Activated naive CD4-positive, alpha-beta T cell treated with anti-CD3 and anti-CD28 coated beads for 36 hours (primary cell): ENCODE measurements at regions of chr17 and their contacts with region 1.

Region 1: DNA sequence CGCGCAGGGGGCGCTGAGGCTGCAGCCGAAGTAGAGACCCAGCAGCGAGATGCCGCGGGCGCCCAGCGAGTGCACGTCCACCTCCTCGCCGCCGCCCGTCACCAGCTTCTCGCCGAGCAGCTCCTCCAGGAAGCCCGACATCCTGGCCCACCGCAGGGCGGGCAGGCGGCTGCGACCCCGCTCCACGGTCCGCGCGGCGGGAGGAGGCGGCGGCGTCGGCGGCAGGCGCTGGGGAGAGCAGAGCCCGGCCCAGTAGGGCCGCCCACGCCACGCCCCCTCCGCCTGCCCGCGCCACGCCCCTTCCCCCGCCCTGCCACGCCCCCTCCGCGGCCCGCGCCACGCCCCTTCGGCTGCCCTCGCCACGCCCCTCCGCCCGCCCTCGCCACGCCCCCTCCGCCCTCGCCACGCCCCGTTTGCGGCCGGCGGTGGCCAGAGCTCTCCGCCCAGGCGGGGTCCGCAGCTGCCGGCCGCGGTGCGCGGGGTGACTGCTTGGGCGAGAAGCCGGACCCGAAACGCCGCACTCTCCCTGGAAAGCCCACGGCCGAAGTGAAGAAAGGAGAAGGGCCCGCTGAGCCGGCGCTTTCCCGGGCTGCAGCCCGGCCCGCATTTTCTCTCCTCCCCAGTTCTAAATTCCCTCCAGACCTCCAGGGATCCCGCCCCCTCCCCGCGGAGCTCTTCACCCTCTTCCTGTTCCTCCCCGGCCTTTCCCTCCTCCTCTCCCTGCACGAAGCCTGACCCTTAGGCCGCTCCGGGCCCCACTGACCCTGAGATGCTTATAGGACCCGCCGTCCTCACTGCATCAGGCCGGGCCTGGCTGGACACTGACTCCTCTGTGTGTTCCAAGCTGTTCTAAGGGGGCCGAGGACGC is at the start of gene NXN:
- DNase-seq: peak; percentile 86
- H3K4me3 Mint-ChIP-seq: peak within 1 kb of the TSS; percentile 66
- H3K27ac Mint-ChIP-seq: no peak within 1 kb of the TSS
- H3K4me1 Mint-ChIP-seq: peaks cover 19% of the 10 kb centered on the region
- H3K27me3 Mint-ChIP-seq: peaks cover 33% of the 10 kb centered on the region
- total RNA-seq, gene NXN: 0.20 to 0.33 TPM

Region 2: GRCh38 chr17:143782-144281 is 835.9 kb before region 1 on chr17:
- CTCF ChIA-PET with region 1: no interaction called
- intact Hi-C with region 1: loop called (anchors 2 kb)
- DNase-seq: peak; percentile 88
- H3K4me3 Mint-ChIP-seq: no peak overlapping the region
- H3K27ac Mint-ChIP-seq: no peak overlapping the region
- H3K4me1 Mint-ChIP-seq: no peaks in the 10 kb centered on the region
- H3K27me3 Mint-ChIP-seq: peaks cover 4% of the 10 kb centered on the region

Region 3: GRCh38 chr17:794876-795275 is 184.9 kb before region 1 on chr17:
- CTCF ChIA-PET with region 1: interaction called, 23 read pairs
- intact Hi-C with region 1: loop called (anchors 1 kb)
- DNase-seq: peak; percentile 64
- H3K4me3 Mint-ChIP-seq: no peak overlapping the region
- H3K27ac Mint-ChIP-seq: no peak overlapping the region
- H3K4me1 Mint-ChIP-seq: peaks cover 6% of the 10 kb centered on the region
- H3K27me3 Mint-ChIP-seq: no peaks in the 10 kb centered on the region

Region 4: GRCh38 chr17:879549-880442 is 100.0 kb before region 1 on chr17:
- CTCF ChIA-PET with region 1: interaction called, 21 read pairs
- intact Hi-C with region 1: loop called (anchors 1 kb)
- DNase-seq: peak; percentile 76
- H3K4me3 Mint-ChIP-seq: no peak overlapping the region
- H3K27ac Mint-ChIP-seq: no peak overlapping the region
- H3K4me1 Mint-ChIP-seq: peaks cover 7% of the 10 kb centered on the region
- H3K27me3 Mint-ChIP-seq: peaks cover 11% of the 10 kb centered on the region